ENCODE measurements at regions of chr7 and their contacts with region 1.

Region 1: DNA sequence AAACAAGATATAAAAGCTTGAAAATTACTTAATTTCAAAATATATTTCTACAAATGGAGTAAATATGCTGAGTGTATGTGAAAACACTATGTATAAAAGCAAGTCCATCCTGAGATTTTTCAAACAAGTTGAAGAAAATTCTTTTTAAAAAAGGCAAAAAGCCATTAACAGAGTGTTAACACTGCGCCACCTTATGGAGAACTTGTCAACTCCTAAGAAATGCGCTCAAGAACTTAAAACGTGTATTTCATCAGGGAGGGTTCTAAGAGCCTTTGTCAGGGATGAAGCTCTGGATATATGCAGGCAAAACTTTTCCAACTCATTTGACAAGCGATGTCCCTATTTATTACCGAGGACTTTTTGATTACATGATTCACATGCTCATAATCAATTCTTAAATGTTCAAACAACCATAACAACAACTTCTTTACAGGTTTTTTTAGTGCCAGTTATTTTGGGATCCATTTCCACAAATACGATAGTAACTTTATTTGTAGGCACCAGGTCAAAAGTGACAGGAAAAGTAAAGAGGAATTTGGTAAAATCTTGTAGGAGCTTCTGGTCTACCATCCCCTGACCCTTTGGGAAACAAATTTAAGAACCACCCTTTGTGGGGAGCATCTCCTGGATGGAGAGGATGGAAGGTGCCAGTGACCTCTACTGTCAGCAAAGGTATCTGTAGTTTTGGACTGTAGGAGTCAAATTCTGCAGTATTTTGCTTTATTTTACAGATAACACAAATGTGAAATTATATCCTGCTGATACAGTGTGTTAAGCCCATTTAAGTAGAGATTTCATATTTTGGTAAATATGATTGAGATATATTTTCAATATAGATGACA is 23.2 kb downstream of the CALCR start:
- DNase-seq: peak; percentile 54
- H3K4me3 ChIP-seq: no peak overlapping the region
- H3K27ac ChIP-seq: no peak overlapping the region
- H3K4me1 ChIP-seq: no peaks in the 10 kb centered on the region
- H3K27me3 ChIP-seq: peaks cover 4 to 6% of the 10 kb centered on the region in 2 experiments
- CTCF ChIP-seq: peak; percentile 44 to 52
- POLR2A ChIP-seq: no peak

Region 2: GRCh38 chr7:93092757-93093370 is 458.4 kb before region 1 on chr7:
- CTCF ChIA-PET with region 1: interaction called, 3 read pairs
- POLR2A ChIA-PET with region 1: no interaction called
- dilution Hi-C with region 1: no loop called
- intact Hi-C with region 1: loop called (anchors 5 kb)
- DNase-seq: peak; percentile 56
- H3K4me3 ChIP-seq: no peak overlapping the region
- H3K27ac ChIP-seq: no peak overlapping the region
- H3K4me1 ChIP-seq: no peaks in the 10 kb centered on the region
- H3K27me3 ChIP-seq: peaks cover 11 to 19% of the 10 kb centered on the region in 2 experiments
- CTCF ChIP-seq: peak; percentile 23 to 42
- POLR2A ChIP-seq: no peak

Region 3: GRCh38 chr7:93218997-93219827 is 332.1 kb before region 1 on chr7:
- CTCF ChIA-PET with region 1: no interaction called
- POLR2A ChIA-PET with region 1: no interaction called
- dilution Hi-C with region 1: no loop called
- intact Hi-C with region 1: no loop called
- DNase-seq: no peak
- H3K4me3 ChIP-seq: no peak overlapping the region
- H3K27ac ChIP-seq: no peak overlapping the region
- H3K4me1 ChIP-seq: no peaks in the 10 kb centered on the region
- H3K27me3 ChIP-seq: peaks cover 4 to 22% of the 10 kb centered on the region in 2 experiments
- CTCF ChIP-seq: no peak
- POLR2A ChIP-seq: no peak

Region 4: GRCh38 chr7:93374345-93374940 is 176.8 kb before region 1 on chr7:
- CTCF ChIA-PET with region 1: interaction called, 14 read pairs
- POLR2A ChIA-PET with region 1: no interaction called
- dilution Hi-C with region 1: no loop called
- intact Hi-C with region 1: no loop called
- DNase-seq: peak; percentile 54
- H3K4me3 ChIP-seq: no peak overlapping the region
- H3K27ac ChIP-seq: no peak overlapping the region
- H3K4me1 ChIP-seq: no peaks in the 10 kb centered on the region
- H3K27me3 ChIP-seq: peaks cover 11 to 13% of the 10 kb centered on the region in 2 experiments
- CTCF ChIP-seq: peak; percentile 50 to 69
- POLR2A ChIP-seq: no peak

Region 5: GRCh38 chr7:93442478-93443224 is 108.6 kb before region 1 on chr7:
- CTCF ChIA-PET with region 1: interaction called, 4 read pairs
- POLR2A ChIA-PET with region 1: no interaction called
- dilution Hi-C with region 1: no loop called
- intact Hi-C with region 1: loop called (anchors 1 kb)
- DNase-seq: peak; percentile 26
- H3K4me3 ChIP-seq: no peak overlapping the region
- H3K27ac ChIP-seq: no peak overlapping the region
- H3K4me1 ChIP-seq: no peaks in the 10 kb centered on the region
- H3K27me3 ChIP-seq: peaks cover 3 to 4% of the 10 kb centered on the region in 2 experiments
- CTCF ChIP-seq: peak; percentile 63 to 70
- POLR2A ChIP-seq: no peak

Region 6: GRCh38 chr7:93566876-93567275 is 15.6 kb after region 1 on chr7:
- CTCF ChIA-PET with region 1: interaction called, 15 read pairs
- POLR2A ChIA-PET with region 1: no interaction called
- dilution Hi-C with region 1: no loop called
- intact Hi-C with region 1: no loop called
- DNase-seq: no peak
- H3K4me3 ChIP-seq: no peak overlapping the region
- H3K27ac ChIP-seq: no peak overlapping the region
- H3K4me1 ChIP-seq: no peaks in the 10 kb centered on the region
- H3K27me3 ChIP-seq: peaks cover 4 to 13% of the 10 kb centered on the region in 2 experiments
- CTCF ChIP-seq: no peak
- POLR2A ChIP-seq: no peak

Measured in endothelial cell of umbilical vein (primary cell).